Colonic mucosa (tissue), 4 donors: ENCODE measurements at regions of chr7 and their contacts with region 1.

Region 1: GRCh38 chr7:45111298-45112223 is at the start of gene TBRG4:
- DNase-seq: peak; percentile 96
- H3K4me3 ChIP-seq: peak within 1 kb of the TSS; percentile 65
- H3K27ac ChIP-seq: peak within 1 kb of the TSS; percentile 94
- H3K4me1 ChIP-seq: peaks cover 13% of the 10 kb centered on the region
- H3K27me3 ChIP-seq: no peaks in the 10 kb centered on the region
- CTCF ChIP-seq: no peak
- total RNA-seq, gene TBRG4: 91.0 to 147 TPM

Region 2: DNA sequence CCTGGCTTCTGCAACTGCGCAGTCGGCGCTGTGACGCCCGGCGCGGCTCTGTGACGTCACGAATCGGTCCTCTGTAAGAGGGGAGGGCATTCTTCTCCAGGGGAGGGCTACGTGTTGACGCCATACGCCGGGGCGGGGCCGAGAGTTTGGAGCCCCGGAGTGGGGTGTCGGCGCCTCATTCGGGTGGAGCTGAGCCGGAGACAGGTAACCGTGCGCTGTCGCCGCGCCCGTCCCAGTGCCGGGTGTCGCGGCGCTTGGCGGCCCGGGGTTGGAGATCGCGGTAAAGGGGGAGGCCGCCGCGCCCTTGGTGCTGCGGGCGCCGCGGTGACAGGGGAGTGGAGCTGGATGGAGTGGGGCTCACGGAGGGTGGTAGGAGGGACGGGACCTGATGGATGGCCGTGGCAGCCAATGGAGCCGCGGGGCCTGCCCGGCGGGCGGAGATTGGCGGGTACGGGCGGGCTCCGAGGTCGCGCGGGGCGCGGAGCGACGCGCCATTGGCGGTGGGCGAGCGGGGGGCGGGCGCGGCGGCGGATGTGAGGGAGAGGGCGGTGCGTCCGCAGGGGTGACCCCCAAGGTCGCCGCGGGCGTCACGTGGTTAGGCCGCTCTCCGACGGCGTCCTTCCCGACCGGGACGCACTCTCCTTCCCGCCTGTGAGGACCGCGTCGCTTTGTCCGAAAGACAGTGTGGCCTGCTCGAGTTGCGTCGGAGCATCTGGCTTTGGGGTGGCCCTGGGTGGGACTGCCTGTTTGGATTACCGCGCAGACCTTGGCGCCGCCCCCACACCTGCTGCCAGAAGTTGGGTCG is 504.9 kb before region 1 on chr7 and contains the start of gene OGDH:
- intact Hi-C with region 1: loop called (anchors 10 kb)
- DNase-seq: peak; percentile 100
- H3K4me3 ChIP-seq: peak within 1 kb of the TSS; percentile 70
- H3K27ac ChIP-seq: peak within 1 kb of the TSS; percentile 97
- H3K4me1 ChIP-seq: no peaks in the 10 kb centered on the region
- H3K27me3 ChIP-seq: no peaks in the 10 kb centered on the region
- CTCF ChIP-seq: no peak
- total RNA-seq, gene OGDH: 142 to 164 TPM

Region 3: GRCh38 chr7:45183503-45184210 is 72.1 kb after region 1 on chr7:
- intact Hi-C with region 1: no loop called
- DNase-seq: no peak
- H3K4me3 ChIP-seq: no peak overlapping the region
- H3K27ac ChIP-seq: no peak overlapping the region
- H3K4me1 ChIP-seq: no peaks in the 10 kb centered on the region
- H3K27me3 ChIP-seq: no peaks in the 10 kb centered on the region
- CTCF ChIP-seq: no peak